PC-3 (cell line): ENCODE measurements at regions of chr3 and their contacts with region 1.

Region 1: DNA sequence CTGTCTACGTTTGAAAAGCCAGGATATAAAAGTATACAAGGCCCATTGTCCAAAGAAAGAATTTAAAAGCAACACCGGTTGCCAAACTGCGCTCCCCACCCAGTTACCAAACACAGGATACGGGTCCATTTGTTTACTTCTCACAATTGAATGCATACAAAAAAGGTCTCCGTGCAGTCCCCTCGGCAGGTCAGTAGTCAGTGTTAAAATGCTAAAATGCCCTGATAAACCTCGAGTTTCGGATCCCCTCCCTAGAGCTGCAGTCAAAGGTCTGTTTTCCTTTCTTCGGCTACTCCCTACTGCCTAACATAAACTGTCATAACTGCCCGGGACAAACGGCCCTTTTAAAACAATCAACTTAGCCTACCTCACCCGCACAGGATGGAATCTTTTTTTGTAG is 534.6 kb downstream of the FOXP1 start:
- DNase-seq: peak; percentile 82
- ATAC-seq: peak; percentile 85
- H3K4me3 ChIP-seq: peak overlapping the region; percentile 26
- H3K27ac ChIP-seq: peak overlapping the region; percentile 91
- H3K4me1 ChIP-seq: peaks cover 56% of the 10 kb centered on the region
- H3K27me3 ChIP-seq: no peaks in the 10 kb centered on the region
- CTCF ChIP-seq: no peak

Region 2: GRCh38 chr3:70982700-70983140 is 66.2 kb before region 1 on chr3:
- CTCF ChIA-PET with region 1: no interaction called
- POLR2A ChIA-PET with region 1: no interaction called
- intact Hi-C with region 1: loop called (anchors 1 kb)
- DNase-seq: peak; percentile 97
- ATAC-seq: peak; percentile 98
- H3K4me3 ChIP-seq: peak overlapping the region; percentile 55
- H3K27ac ChIP-seq: peak overlapping the region; percentile 92
- H3K4me1 ChIP-seq: peaks cover 29% of the 10 kb centered on the region
- H3K27me3 ChIP-seq: no peaks in the 10 kb centered on the region
- CTCF ChIP-seq: no peak

Region 3: GRCh38 chr3:71006810-71007785 is 41.8 kb before region 1 on chr3:
- CTCF ChIA-PET with region 1: no interaction called
- POLR2A ChIA-PET with region 1: no interaction called
- intact Hi-C with region 1: loop called (anchors 1 kb)
- DNase-seq: peak; percentile 69
- ATAC-seq: peak; percentile 60
- H3K4me3 ChIP-seq: no peak overlapping the region
- H3K27ac ChIP-seq: peak overlapping the region; percentile 35
- H3K4me1 ChIP-seq: peaks cover 23% of the 10 kb centered on the region
- H3K27me3 ChIP-seq: no peaks in the 10 kb centered on the region
- CTCF ChIP-seq: peak; percentile 82

Region 4: GRCh38 chr3:71026634-71027578 is 22.0 kb before region 1 on chr3:
- CTCF ChIA-PET with region 1: no interaction called
- POLR2A ChIA-PET with region 1: no interaction called
- intact Hi-C with region 1: loop called (anchors 1 kb)
- DNase-seq: peak; percentile 73
- ATAC-seq: peak; percentile 83
- H3K4me3 ChIP-seq: no peak overlapping the region
- H3K27ac ChIP-seq: peak overlapping the region; percentile 77
- H3K4me1 ChIP-seq: peaks cover 44% of the 10 kb centered on the region
- H3K27me3 ChIP-seq: no peaks in the 10 kb centered on the region
- CTCF ChIP-seq: no peak

Region 5: DNA sequence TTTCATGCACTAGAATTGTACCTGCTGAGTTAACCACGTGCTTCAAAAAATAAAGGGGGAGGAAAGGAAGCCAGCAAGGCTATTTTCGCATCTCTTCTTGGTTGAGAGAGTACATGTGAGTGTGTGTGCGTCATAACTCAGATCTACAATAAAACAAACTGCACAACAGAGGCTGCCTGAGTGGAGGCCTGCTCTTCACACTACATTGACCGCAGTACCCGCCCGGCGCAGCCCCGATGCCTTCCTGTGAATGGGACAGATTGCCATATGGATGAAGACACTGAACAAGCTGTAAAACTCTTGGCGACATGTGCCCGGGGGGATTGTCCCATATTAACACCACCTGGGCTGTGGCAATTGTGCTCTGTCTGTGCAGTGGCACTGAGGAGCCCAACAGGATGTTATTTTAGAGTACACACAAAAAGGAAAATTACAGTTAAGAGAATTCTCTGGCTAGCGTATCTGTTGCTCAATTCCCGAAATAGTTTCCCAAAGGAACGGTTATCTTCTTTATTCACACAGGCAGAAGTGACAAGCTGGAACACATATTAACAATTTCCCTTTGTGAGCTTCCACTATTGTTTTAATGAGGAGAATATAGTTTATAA is 16.9 kb before region 1 on chr3:
- CTCF ChIA-PET with region 1: no interaction called
- POLR2A ChIA-PET with region 1: interaction called, 3 read pairs
- intact Hi-C with region 1: loop called (anchors 1 kb)
- DNase-seq: no peak
- ATAC-seq: no peak
- H3K4me3 ChIP-seq: no peak overlapping the region
- H3K27ac ChIP-seq: peak overlapping the region; percentile 36; the same call in 1 of the 2 replicates
- H3K4me1 ChIP-seq: peaks cover 37% of the 10 kb centered on the region
- H3K27me3 ChIP-seq: no peaks in the 10 kb centered on the region
- CTCF ChIP-seq: no peak

Region 6: DNA sequence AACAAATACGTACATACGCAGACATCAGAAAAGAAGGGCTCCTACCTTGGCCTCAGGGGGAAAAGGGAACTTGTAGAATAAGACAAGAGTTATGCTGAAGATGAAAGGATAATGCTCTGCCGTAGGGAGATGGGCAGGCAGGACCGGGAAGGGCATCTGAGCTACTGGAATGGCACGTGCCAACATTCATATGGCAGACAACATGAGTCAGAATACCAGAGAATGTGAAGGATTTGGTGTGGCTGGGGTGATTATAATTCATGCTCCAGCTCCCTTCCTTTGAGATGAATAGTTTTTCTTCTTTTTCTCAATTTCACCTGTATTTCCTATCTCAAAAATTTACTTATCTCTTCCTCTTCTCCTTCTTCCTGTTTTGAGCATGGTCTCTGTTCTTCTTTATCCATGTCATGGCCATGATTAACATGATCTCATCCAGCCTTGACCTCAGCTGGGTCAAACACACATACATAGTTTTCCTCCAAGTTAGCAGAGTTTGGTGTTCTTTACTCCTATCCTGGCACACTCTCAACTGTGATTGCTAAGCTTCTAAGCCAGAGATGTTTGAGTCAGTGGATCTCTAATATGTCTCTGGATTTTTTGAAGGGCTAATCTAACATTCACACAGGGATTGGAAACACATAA is 27.5 kb after region 1 on chr3:
- CTCF ChIA-PET with region 1: no interaction called
- POLR2A ChIA-PET with region 1: no interaction called
- intact Hi-C with region 1: no loop called
- DNase-seq: no peak
- ATAC-seq: no peak
- H3K4me3 ChIP-seq: no peak overlapping the region
- H3K27ac ChIP-seq: no peak overlapping the region
- H3K4me1 ChIP-seq: peaks cover 34% of the 10 kb centered on the region
- H3K27me3 ChIP-seq: no peaks in the 10 kb centered on the region
- CTCF ChIP-seq: no peak

Region 7: GRCh38 chr3:71109241-71109976 is 60.5 kb after region 1 on chr3:
- CTCF ChIA-PET with region 1: no interaction called
- POLR2A ChIA-PET with region 1: no interaction called
- intact Hi-C with region 1: loop called (anchors 2 kb)
- DNase-seq: peak; percentile 86
- ATAC-seq: peak; percentile 56
- H3K4me3 ChIP-seq: peak overlapping the region; percentile 63
- H3K27ac ChIP-seq: peak overlapping the region; percentile 92
- H3K4me1 ChIP-seq: peaks cover 56% of the 10 kb centered on the region
- H3K27me3 ChIP-seq: no peaks in the 10 kb centered on the region
- CTCF ChIP-seq: no peak

Region 8: GRCh38 chr3:71369701-71370391 is 320.9 kb after region 1 on chr3:
- CTCF ChIA-PET with region 1: no interaction called
- POLR2A ChIA-PET with region 1: no interaction called
- intact Hi-C with region 1: no loop called
- DNase-seq: no peak
- ATAC-seq: no peak
- H3K4me3 ChIP-seq: no peak overlapping the region
- H3K27ac ChIP-seq: no peak overlapping the region
- H3K4me1 ChIP-seq: no peaks in the 10 kb centered on the region
- H3K27me3 ChIP-seq: no peaks in the 10 kb centered on the region
- CTCF ChIP-seq: no peak